ENCODE measurements at regions of chr17 and their contacts with region 1.

Region 1: GRCh38 chr17:59311130-59311920 is 20.1 kb upstream of the YPEL2 start:
- DNase-seq: peak; percentile 48
- ATAC-seq: peak; percentile 99
- H3K4me3 Mint-ChIP-seq: no peak overlapping the region
- H3K27ac Mint-ChIP-seq: no peak overlapping the region
- H3K4me1 Mint-ChIP-seq: peaks cover 2% of the 10 kb centered on the region
- H3K27me3 Mint-ChIP-seq: no peaks in the 10 kb centered on the region

Region 2: DNA sequence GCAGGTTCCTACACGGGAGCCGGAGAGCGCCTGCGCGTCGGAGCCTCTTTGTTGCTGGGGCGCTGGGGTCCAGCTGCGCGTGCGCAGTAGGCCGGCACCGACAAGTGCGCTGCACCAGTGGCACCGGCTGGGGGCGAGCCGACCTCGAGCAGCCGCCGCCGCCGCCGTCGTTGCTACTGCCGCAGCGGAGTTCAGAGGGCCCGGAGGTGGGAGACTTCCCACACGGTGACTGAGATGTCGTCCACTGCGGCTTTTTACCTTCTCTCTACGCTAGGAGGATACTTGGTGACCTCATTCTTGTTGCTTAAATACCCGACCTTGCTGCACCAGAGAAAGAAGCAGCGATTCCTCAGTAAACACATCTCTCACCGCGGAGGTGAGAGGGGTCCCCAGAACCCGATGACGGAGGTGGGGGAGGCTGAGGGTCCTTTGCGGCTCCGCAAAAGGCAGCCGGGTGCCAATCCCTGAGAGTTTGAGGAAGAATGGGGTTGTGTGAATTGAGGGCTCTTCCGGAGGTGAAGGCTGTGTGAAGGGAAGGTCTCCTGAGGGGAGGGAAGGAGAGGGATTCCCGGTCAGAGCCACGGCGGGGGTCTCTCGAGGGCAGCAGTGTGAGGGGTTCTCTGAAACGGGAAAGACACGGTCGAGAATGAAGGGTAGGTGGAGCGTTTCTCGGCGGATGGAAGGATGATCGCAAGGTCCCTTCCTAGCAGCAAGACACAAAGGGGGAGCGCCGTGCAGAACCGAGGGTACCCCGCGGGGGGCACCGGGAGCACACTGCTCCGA is 90.8 kb before region 1 on chr17 and contains the start of gene GDPD1:
- CTCF ChIA-PET with region 1: no interaction called
- POLR2A ChIA-PET with region 1: no interaction called
- intact Hi-C with region 1: loop called in 1 of 2 experiments (anchors 1 kb)
- DNase-seq: peak; percentile 99
- ATAC-seq: peak; percentile 99
- H3K4me3 Mint-ChIP-seq: peak within 1 kb of the TSS; percentile 93
- H3K27ac Mint-ChIP-seq: peak within 1 kb of the TSS; percentile 86
- H3K4me1 Mint-ChIP-seq: peaks cover 12% of the 10 kb centered on the region
- H3K27me3 Mint-ChIP-seq: no peaks in the 10 kb centered on the region
- total RNA-seq, gene GDPD1: 2.5 to 2.7 TPM

Region 3: GRCh38 chr17:59427425-59427921 is 116.1 kb after region 1 on chr17:
- CTCF ChIA-PET with region 1: interaction called, 13 read pairs
- POLR2A ChIA-PET with region 1: no interaction called
- intact Hi-C with region 1: no loop called
- DNase-seq: peak; percentile 81
- ATAC-seq: peak; percentile 99
- H3K4me3 Mint-ChIP-seq: no peak overlapping the region
- H3K27ac Mint-ChIP-seq: no peak overlapping the region
- H3K4me1 Mint-ChIP-seq: peaks cover 25% of the 10 kb centered on the region
- H3K27me3 Mint-ChIP-seq: peaks cover 3% of the 10 kb centered on the region

Region 4: DNA sequence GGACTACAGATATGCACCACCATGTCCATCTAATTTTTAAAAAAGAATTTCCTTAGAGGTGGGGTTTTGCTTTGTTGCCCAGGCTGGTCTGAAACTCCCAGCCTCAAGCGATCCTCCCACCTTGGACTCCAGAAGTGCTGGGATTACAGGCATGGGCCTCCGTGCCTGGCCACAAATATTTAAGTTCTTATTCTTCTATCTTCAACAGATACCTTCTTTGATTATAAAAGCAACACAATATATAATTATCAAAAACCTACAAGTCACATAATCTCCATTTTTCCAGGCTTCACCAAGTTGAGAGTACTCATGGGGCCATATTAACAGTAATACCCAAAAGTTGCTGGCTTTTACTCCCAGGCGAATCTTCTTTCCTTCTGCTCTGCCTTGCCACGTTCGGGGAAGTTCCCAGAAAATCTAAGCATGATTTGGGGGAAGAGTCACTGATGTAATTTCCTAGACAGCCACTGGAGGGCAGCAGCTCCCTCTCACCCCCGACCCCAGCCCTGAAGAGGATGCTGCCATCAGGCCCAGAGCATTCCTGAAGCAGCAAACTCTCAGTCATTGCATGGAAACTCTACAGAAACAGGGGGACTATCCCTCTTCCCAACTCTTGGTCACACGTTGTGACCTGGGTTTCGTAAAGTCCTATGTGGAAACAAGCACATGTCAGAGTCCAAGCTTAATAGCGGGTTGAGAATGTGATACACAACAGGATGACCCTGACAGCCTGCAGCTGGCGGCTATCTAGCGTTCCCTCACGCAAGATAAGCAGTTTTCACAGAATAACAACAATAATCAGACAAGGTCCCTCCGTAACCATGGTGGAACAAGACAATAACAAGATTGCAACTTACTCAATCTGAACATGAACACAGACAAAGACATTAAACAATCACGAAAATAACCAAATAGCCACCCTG is 210.1 kb after region 1 on chr17:
- CTCF ChIA-PET with region 1: interaction called, 20 read pairs
- POLR2A ChIA-PET with region 1: no interaction called
- intact Hi-C with region 1: loop called (anchors 1 to 2 kb)
- DNase-seq: peak; percentile 80
- ATAC-seq: peak; percentile 85
- H3K4me3 Mint-ChIP-seq: no peak overlapping the region
- H3K27ac Mint-ChIP-seq: no peak overlapping the region
- H3K4me1 Mint-ChIP-seq: peaks cover 4% of the 10 kb centered on the region
- H3K27me3 Mint-ChIP-seq: peaks cover 9% of the 10 kb centered on the region

Region 5: DNA sequence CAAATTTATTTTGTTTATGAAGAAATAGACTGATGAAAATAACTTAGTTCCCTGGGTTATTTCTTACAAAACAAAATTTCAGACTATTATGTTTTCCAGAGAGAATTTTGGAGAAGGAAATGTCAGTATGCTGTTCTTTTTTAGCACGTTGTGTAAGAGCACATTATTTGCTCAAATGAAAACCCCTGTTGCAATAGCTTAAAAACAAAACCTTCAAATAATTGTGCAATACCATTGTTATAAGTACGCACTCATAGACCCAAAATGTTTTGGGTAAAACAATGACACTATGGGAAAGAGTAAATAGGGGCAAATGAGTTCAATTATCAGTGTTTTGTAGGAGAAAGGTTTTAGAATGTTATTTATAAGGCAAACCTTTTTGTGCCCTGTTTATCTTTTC is 414.4 kb after region 1 on chr17:
- CTCF ChIA-PET with region 1: interaction called, 3 read pairs
- POLR2A ChIA-PET with region 1: no interaction called
- intact Hi-C with region 1: loop called in 1 of 2 experiments (anchors 5 kb)
- DNase-seq: no peak
- ATAC-seq: no peak
- H3K4me3 Mint-ChIP-seq: no peak overlapping the region
- H3K27ac Mint-ChIP-seq: no peak overlapping the region
- H3K4me1 Mint-ChIP-seq: peaks cover 18% of the 10 kb centered on the region
- H3K27me3 Mint-ChIP-seq: no peaks in the 10 kb centered on the region

Measured in activated CD4-positive, alpha-beta T cell treated with anti-CD3 and anti-CD28 coated beads for 36 hours (primary cell).